Activated naive CD4-positive, alpha-beta T cell treated with anti-CD3 and anti-CD28 coated beads for 36 hours (primary cell): ENCODE measurements at regions of chr14 and their contacts with region 1.

Region 1: DNA sequence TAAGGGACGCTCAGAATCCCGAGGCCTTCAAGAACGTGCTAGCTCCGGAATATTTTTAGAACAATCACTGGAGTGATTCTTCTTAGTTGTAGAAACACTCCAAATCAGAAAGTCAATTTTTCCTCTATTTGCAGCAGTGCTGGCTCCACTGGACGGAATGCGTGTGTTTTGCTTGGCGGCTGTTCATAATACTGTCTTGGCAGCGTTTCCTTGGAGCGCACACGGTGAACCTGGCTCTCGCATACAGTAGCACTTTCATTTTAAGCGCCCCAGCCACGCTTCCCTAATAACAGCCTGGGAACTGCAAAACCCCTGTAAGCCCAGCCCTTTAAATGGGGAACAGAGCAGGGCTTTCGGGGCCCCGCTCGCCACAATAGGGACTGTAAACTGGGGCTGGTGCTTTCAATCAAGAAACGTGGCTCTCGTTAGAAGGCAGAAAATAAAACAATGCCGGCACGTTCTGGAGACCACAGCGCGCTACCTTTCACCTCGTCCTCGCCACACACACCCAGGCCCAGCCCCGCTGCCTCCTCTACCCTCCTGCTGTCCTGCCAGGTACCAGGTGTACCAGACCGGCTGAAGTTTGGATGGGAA is 79.9 kb downstream of the BCL11B start:
- DNase-seq: peak; percentile 59
- H3K4me3 Mint-ChIP-seq: peak overlapping the region; percentile 77
- H3K27ac Mint-ChIP-seq: peak overlapping the region; percentile 95
- H3K4me1 Mint-ChIP-seq: peaks cover 81% of the 10 kb centered on the region
- H3K27me3 Mint-ChIP-seq: no peaks in the 10 kb centered on the region

Region 2: GRCh38 chr14:97299661-97300060 is 1892.5 kb before region 1 on chr14:
- CTCF ChIA-PET with region 1: no interaction called
- intact Hi-C with region 1: loop called (anchors 10 kb)
- DNase-seq: peak; percentile 62
- H3K4me3 Mint-ChIP-seq: no peak overlapping the region
- H3K27ac Mint-ChIP-seq: no peak overlapping the region
- H3K4me1 Mint-ChIP-seq: peaks cover 4% of the 10 kb centered on the region
- H3K27me3 Mint-ChIP-seq: no peaks in the 10 kb centered on the region

Region 3: DNA sequence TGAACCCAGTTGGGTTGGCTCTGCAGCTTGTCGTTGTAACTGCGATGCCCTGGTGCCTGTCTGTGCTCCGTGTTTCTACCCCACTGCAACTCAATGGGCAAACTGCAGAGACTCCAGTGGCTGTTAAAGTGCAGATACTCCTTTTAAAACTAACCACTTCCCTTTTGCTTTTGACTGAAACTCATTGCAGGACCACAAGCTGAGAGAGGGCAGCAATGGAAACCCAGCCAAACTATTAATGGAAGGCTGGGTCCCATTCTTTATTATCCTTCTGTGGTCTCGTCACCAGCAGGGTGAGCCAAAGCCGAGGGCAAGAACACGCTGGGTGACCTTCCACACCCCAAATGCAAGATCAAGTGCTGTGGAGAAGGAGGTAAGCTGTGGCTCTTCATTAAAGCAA is 1484.5 kb before region 1 on chr14:
- CTCF ChIA-PET with region 1: no interaction called
- intact Hi-C with region 1: loop called (anchors 10 kb)
- DNase-seq: peak; percentile 47
- H3K4me3 Mint-ChIP-seq: no peak overlapping the region
- H3K27ac Mint-ChIP-seq: no peak overlapping the region
- H3K4me1 Mint-ChIP-seq: peaks cover 92% of the 10 kb centered on the region
- H3K27me3 Mint-ChIP-seq: no peaks in the 10 kb centered on the region

Region 4: GRCh38 chr14:98227000-98227726 is 965.0 kb before region 1 on chr14:
- CTCF ChIA-PET with region 1: no interaction called
- intact Hi-C with region 1: loop called (anchors 5 kb)
- DNase-seq: peak; percentile 67
- H3K4me3 Mint-ChIP-seq: peak overlapping the region; percentile 51
- H3K27ac Mint-ChIP-seq: peak overlapping the region; percentile 93
- H3K4me1 Mint-ChIP-seq: peaks cover 86% of the 10 kb centered on the region
- H3K27me3 Mint-ChIP-seq: no peaks in the 10 kb centered on the region

Region 5: DNA sequence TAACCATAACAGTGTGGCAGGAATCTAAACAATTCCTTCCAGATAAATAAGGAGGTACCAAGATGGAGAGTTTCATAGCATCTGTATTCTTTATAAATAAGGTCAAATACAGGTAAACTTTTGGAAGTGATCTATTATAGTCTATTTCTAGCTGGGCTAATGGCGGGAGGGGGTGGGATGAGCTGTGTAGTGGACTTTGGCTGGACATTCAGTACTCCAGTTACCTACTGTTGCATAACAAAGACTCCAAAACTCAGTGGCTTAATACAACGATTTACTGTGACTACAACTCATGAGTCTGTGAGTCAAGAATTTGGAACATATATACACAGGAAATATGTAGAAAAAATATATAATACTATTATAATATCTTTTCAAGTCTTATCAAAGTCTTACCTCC is 416.2 kb before region 1 on chr14:
- CTCF ChIA-PET with region 1: no interaction called
- intact Hi-C with region 1: no loop called
- DNase-seq: no peak
- H3K4me3 Mint-ChIP-seq: no peak overlapping the region
- H3K27ac Mint-ChIP-seq: no peak overlapping the region
- H3K4me1 Mint-ChIP-seq: no peaks in the 10 kb centered on the region
- H3K27me3 Mint-ChIP-seq: no peaks in the 10 kb centered on the region

Region 6: GRCh38 chr14:99143793-99144192 is 48.3 kb before region 1 on chr14:
- CTCF ChIA-PET with region 1: no interaction called
- intact Hi-C with region 1: no loop called
- DNase-seq: no peak
- H3K4me3 Mint-ChIP-seq: no peak overlapping the region
- H3K27ac Mint-ChIP-seq: no peak overlapping the region
- H3K4me1 Mint-ChIP-seq: peaks cover 6% of the 10 kb centered on the region
- H3K27me3 Mint-ChIP-seq: no peaks in the 10 kb centered on the region

Region 7: GRCh38 chr14:99177886-99178835 is 14.0 kb before region 1 on chr14:
- CTCF ChIA-PET with region 1: interaction called, 13 read pairs
- intact Hi-C with region 1: no loop called
- DNase-seq: no peak
- H3K4me3 Mint-ChIP-seq: no peak overlapping the region
- H3K27ac Mint-ChIP-seq: peak overlapping the region; percentile 95
- H3K4me1 Mint-ChIP-seq: peaks cover 53% of the 10 kb centered on the region
- H3K27me3 Mint-ChIP-seq: no peaks in the 10 kb centered on the region

Region 8: DNA sequence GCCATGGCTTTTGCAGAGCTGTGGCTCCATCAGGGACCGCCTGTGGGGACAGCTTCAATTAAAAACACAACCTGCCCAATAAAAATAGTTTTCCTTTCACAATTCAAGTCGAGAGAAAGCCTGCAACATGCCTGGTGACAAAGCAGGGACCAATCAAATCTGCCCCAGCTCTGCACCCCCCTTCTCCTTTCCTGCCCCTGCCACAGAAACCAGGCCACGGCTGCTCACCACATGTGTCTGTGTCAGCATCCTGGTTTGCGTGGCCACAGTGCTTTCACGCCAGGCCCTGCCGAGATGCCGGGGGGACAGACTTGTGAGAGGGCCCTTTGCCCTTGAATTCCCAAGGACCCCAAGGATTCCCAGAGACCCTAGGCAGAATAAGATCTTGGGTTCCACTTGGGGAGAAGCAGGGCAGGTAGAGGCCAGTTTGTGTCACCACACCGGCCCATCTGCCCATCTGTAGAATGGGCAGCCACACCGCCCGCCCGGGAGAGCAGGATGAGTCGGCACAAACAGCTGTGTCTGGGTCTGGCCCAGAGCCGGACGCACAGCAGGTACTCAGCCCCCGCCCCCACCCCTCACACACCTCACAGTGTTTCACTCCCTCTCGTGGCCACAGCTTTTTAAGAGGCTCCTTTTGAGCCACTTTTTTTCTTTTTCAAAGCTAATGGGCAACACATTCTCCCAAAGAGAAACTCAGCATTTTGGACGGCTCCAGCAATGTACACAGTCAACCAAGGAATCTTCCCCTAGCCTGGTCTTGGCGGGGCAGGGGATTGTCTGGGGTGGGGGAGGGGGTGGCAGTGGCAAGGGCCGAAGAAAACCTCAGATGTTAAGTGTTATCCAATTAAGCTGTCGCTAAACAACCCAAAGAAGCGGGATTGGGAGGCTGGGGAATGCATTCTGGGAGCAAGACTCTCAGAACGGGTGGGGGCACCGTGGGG is 38.4 kb after region 1 on chr14:
- CTCF ChIA-PET with region 1: interaction called, 10 read pairs
- intact Hi-C with region 1: loop called (anchors 1 kb)
- DNase-seq: peak; percentile 93
- H3K4me3 Mint-ChIP-seq: peak overlapping the region; percentile 73
- H3K27ac Mint-ChIP-seq: peak overlapping the region; percentile 97
- H3K4me1 Mint-ChIP-seq: peaks cover 95% of the 10 kb centered on the region
- H3K27me3 Mint-ChIP-seq: no peaks in the 10 kb centered on the region

Region 9: DNA sequence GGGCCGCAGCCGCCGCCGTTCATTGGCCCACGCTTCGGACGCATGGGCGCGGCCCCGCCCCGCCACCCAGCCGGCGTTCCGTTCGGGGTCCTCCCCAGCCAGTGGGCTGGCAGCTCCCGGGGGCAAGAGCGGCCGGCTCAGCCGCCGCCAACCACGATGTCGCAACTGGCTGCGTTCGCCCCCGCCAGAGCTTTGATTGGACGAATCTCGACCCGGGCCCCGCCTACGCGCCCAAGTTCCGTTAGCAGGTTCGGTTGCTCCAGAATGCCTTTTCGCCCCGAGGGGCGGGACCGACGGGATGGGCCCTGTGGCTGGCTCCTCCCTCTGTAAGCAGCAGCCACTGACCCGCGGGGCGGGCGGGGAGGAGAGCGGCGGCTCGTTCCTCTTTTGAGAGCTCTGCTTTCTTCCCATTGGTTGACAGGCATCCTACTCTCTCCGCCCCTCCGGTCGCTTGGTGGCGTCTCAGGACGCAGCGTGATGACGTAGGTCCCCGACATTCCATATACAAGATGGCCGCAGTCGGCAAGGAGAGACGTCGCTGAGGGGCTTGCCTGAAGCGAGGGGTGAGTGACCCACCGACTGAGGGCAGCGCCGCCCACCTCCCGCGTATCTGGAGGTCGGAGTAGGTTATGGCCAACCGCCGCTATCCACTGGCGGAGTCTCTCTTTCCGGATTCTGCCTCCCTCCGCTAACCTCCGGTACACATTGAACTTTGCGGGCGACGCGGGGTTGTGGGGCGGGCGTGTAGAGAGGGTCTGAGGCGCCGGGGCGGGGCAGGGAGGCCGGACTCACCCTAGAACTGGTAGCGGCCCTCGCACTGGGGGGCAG is 289.0 kb after region 1 on chr14 and contains the start of gene CCNK:
- CTCF ChIA-PET with region 1: no interaction called
- intact Hi-C with region 1: loop called (anchors 10 kb)
- DNase-seq: peak; percentile 100
- H3K4me3 Mint-ChIP-seq: peak within 1 kb of the TSS; percentile 90
- H3K27ac Mint-ChIP-seq: peak within 1 kb of the TSS; percentile 91
- H3K4me1 Mint-ChIP-seq: peaks cover 53% of the 10 kb centered on the region
- H3K27me3 Mint-ChIP-seq: no peaks in the 10 kb centered on the region
- total RNA-seq, gene CCNK: 90.7 to 99.0 TPM